BJ (cell line): ENCODE measurements at regions of chr1 and their contacts with region 1.

Region 1: GRCh38 chr1:204806943-204807687 is 63.5 kb upstream of the NFASC start:
- DNase-seq: no peak
- H3K4me3 ChIP-seq: peak overlapping the region; percentile 46
- H3K27me3 ChIP-seq: peaks cover 8% of the 10 kb centered on the region
- CTCF ChIP-seq: peak; percentile 93

Region 2: DNA sequence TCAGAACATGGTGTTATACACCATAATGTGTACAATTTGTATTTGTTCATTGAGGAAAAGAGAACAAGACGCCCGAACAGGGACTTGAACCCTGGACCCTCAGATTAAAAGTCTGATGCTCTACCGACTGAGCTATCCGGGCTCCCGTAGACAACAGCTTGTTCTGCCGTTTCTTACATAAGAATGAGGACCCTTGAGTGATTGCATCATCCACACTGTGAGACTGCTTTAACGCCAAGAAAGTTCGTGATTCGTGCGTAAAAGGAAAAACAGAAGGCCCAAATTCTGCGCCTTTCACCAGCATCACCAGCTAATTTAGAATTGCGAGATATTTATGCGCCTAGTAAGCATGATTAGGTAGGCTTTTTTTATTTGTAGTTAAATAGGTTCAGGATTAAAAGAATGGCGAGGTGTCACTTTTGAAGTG is 300.1 kb before region 1 on chr1:
- CTCF ChIA-PET with region 1: interaction called, 28 read pairs
- POLR2A ChIA-PET with region 1: no interaction called
- DNase-seq: peak; percentile 75
- H3K4me3 ChIP-seq: peak overlapping the region; percentile 37
- H3K27me3 ChIP-seq: no peaks in the 10 kb centered on the region
- CTCF ChIP-seq: no peak

Region 3: GRCh38 chr1:204769997-204770396 is 37.1 kb before region 1 on chr1:
- CTCF ChIA-PET with region 1: interaction called, 12 read pairs
- POLR2A ChIA-PET with region 1: no interaction called
- DNase-seq: no peak
- H3K4me3 ChIP-seq: no peak overlapping the region
- H3K27me3 ChIP-seq: peaks cover 31% of the 10 kb centered on the region
- CTCF ChIP-seq: no peak

Region 4: DNA sequence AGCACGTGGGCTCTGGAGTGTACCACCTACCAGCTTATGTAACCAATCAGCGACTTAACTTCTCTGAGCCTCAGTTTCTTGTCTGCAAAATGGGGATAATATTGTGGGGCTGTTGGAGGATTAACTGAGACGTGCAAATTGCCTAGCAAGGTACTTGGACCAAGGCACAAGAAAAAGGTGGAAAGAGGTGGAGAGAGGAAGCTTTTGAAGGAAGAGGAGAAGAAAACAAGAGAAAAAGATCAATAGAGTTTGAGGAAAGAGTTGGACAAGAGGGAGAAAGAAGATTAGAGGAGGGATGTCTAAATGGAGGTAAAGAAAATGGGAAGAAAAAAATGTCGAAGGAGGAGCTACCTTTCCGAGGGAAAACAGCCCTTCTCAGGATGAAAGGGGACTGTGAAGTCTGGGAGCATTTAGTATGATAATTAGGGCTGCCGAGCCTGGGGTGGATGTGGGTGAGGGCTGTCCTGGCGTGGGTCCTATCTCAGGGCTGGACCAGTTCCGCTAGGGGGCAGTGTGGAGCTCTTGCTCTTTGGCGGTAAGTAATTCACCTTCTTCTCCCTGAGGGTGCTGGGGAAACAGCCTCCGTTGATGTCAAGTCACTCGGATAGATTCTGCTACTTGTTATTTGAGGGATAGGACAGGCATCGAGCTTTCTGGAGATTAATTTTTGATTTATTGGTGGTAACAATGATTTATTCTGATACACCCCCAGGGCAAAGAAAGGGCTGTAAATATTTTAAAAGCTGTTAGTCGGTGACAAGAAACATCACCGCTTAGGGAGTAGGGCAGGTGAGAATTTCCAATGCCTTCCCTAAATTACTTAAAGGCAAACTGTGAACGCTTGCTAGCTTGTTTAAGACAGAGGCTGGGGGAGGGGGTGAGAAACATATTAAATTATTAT is 15.4 kb before region 1 on chr1:
- CTCF ChIA-PET with region 1: interaction called, 164 read pairs
- POLR2A ChIA-PET with region 1: no interaction called
- DNase-seq: no peak
- H3K4me3 ChIP-seq: no peak overlapping the region
- H3K27me3 ChIP-seq: peaks cover 11% of the 10 kb centered on the region
- CTCF ChIP-seq: peak; percentile 88

Region 5: GRCh38 chr1:204894031-204894430 is 86.9 kb after region 1 on chr1:
- CTCF ChIA-PET with region 1: interaction called, 12 read pairs
- POLR2A ChIA-PET with region 1: no interaction called
- DNase-seq: no peak
- H3K4me3 ChIP-seq: no peak overlapping the region
- H3K27me3 ChIP-seq: no peaks in the 10 kb centered on the region
- CTCF ChIP-seq: no peak

Region 6: DNA sequence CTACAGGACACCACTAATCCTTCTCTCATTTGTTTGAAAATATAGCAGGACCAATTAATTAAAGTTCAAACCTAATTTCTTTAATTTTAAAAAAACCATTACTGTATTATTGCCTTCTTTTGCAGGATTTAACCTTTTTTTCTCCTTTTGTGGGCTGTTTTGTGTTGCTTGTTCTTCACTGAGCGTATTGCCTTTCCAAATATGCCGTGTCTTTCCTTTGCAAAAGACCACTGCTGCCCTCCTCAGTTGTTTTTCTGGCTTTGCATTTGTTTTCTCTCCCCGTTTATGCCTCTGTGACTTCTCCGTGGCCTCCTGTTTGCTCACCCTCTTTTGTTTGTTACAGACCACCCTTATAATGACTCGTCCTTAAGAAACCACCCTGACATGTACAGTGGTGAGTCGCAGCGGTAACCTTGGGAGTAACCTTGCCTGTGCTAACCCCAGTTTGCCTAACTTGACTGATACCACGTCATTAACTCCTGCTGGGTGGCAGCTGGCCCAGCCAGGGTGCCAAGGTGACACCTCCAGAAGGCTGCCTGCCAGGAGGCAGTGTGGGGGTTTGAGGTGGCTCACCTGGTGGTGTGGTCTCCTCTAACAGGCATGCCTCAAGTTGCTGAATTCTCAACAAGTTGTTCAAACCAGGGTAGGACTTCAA is 154.8 kb after region 1 on chr1:
- CTCF ChIA-PET with region 1: interaction called, 19 read pairs
- POLR2A ChIA-PET with region 1: no interaction called
- DNase-seq: no peak
- H3K4me3 ChIP-seq: no peak overlapping the region
- H3K27me3 ChIP-seq: no peaks in the 10 kb centered on the region
- CTCF ChIP-seq: no peak